Breast epithelium (tissue), 4 donors: ENCODE measurements at regions of chrX and their contacts with region 1.

Region 1: DNA sequence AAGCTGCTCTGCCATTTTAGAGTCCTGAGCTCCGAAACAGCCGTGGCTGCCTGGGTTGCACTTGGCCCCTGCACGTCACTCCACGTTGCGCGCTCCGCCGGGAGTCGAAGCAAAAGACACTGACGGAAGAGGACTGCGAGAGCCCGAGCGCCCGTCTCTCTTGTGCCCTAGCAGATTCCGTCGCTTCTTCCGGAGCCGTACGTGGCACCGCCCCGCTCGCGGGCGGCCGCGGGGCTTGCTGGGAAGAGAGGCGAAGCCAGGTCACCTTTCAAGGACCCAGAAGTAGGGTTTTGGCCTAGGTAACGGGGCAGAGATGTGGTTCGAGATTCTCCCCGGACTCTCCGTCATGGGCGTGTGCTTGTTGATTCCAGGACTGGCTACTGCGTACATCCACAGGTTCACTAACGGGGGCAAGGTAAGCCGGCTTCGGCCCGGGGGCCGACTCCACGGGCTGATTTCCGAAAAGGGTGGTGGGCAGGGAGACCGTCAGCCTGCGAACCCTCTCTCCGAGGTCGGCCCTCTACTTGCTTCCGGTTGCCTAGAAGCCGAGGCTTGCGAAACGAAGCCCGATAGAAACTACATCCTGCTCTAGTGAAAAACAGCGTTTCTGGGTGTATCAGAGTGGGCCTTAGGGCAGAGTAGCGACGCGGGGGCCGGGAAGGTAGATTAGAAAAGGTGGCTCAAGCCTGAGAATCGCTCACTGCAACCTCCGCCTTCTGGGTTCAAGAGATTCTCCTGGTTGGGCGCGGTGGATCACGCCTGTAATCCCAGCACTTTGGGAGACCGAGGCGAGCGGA is at the starts of genes NDUFA1 and RNF113A:
- DNase-seq: peak; percentile 72 to 76
- H3K4me3 ChIP-seq: peak within 1 kb of the TSS; percentile 45 to 68 (median 64)
- H3K27ac ChIP-seq: peak within 1 kb of the TSS; percentile 89 to 92
- H3K4me1 ChIP-seq: no peaks in the 10 kb centered on the region
- H3K27me3 ChIP-seq: no peaks in the 10 kb centered on the region
- CTCF ChIP-seq: no peak
- POLR2A ChIP-seq: no peak
- total RNA-seq, gene NDUFA1: 45.5 to 70.8 (median 47.5) TPM
- total RNA-seq, gene RNF113A: 12.5 to 14.1 (median 13.5) TPM

Region 2: DNA sequence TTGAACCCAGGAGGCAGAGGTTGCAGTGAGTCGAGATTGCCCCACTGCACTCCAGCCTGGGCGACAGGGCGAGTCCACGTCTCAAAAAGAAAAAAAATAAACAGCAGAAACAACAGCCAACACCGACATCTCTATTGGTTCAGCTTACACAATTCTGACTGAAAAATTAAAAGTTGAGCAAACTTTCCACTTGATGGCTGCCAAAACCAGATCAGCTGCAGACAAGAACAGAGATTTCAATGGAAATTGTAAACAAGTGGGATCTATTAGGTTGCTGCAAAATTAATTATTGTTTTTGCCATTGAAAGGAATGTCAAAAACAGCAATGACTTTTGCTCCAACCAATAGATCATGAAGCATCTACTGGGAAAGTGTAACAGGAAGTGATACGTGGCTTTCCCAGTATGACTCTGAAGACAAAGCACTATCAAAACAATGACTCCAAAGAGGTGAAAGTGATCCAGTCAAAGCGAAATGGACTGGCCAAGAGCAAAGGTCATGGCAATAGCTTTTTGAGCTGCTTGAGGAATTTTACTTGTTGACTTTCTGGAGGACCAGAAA is 45.3 kb before region 1 on chrX:
- intact Hi-C with region 1: loop called (anchors 2 kb)
- DNase-seq: no peak
- H3K4me3 ChIP-seq: no peak overlapping the region
- H3K27ac ChIP-seq: peak overlapping the region in 1 of 2 donors; percentile 68
- H3K4me1 ChIP-seq: no peaks in the 10 kb centered on the region
- H3K27me3 ChIP-seq: peaks cover 0 to 3% of the 10 kb centered on the region in 2 donors
- CTCF ChIP-seq: no peak
- POLR2A ChIP-seq: no peak

Region 3: GRCh38 chrX:119852382-119853353 is 19.1 kb before region 1 on chrX and contains the start of gene UPF3B:
- intact Hi-C with region 1: loop called (anchors 1 kb)
- DNase-seq: peak; percentile 94 to 98
- H3K4me3 ChIP-seq: peak within 1 kb of the TSS; percentile 63 to 80 (median 65)
- H3K27ac ChIP-seq: peak within 1 kb of the TSS; percentile 87 to 96
- H3K4me1 ChIP-seq: no peaks in the 10 kb centered on the region
- H3K27me3 ChIP-seq: no peaks in the 10 kb centered on the region
- CTCF ChIP-seq: no peak
- POLR2A ChIP-seq: peak; percentile 32
- total RNA-seq, gene UPF3B: 7.5 to 10.8 (median 8.2) TPM

Region 4: GRCh38 chrX:119916310-119916709 is 44.5 kb after region 1 on chrX:
- intact Hi-C with region 1: no loop called
- DNase-seq: no peak
- H3K4me3 ChIP-seq: no peak overlapping the region
- H3K27ac ChIP-seq: no peak overlapping the region
- H3K4me1 ChIP-seq: no peaks in the 10 kb centered on the region
- H3K27me3 ChIP-seq: peaks cover 0 to 3% of the 10 kb centered on the region in 2 donors
- CTCF ChIP-seq: no peak
- POLR2A ChIP-seq: no peak